CD8-positive, alpha-beta T cell (primary cell): ENCODE measurements at regions of chr2 and their contacts with region 1.

Region 1: GRCh38 chr2:162123806-162124758 is 28.0 kb downstream of the GCG start:
- DNase-seq: peak in 3 of 9 experiments; percentile 22 to 77 (median 72)
- ATAC-seq: peak; percentile 71
- H3K4me3 ChIP-seq: no peak overlapping the region
- H3K4me3 Mint-ChIP-seq: no peak overlapping the region
- H3K27ac ChIP-seq: no peak overlapping the region
- H3K27ac Mint-ChIP-seq: no peak overlapping the region
- H3K4me1 ChIP-seq: no peaks in the 10 kb centered on the region
- H3K4me1 Mint-ChIP-seq: no peaks in the 10 kb centered on the region
- H3K27me3 ChIP-seq: no peaks in the 10 kb centered on the region
- H3K27me3 Mint-ChIP-seq: no peaks in the 10 kb centered on the region
- CTCF ChIP-seq: peak; percentile 96

Region 2: GRCh38 chr2:161223139-161223732 is 900.8 kb before region 1 on chr2:
- CTCF ChIA-PET with region 1: no interaction called
- POLR2A ChIA-PET with region 1: no interaction called
- intact Hi-C with region 1: loop called (anchors 5 to 10 kb)
- DNase-seq: peak in 4 of 9 experiments; percentile 20 to 69 (median 44)
- ATAC-seq: peak; percentile 87
- H3K4me3 ChIP-seq: no peak overlapping the region
- H3K4me3 Mint-ChIP-seq: no peak overlapping the region
- H3K27ac ChIP-seq: no peak overlapping the region
- H3K27ac Mint-ChIP-seq: no peak overlapping the region
- H3K4me1 ChIP-seq: no peaks in the 10 kb centered on the region
- H3K4me1 Mint-ChIP-seq: no peaks in the 10 kb centered on the region
- H3K27me3 ChIP-seq: no peaks in the 10 kb centered on the region
- H3K27me3 Mint-ChIP-seq: no peaks in the 10 kb centered on the region
- CTCF ChIP-seq: peak; percentile 94

Region 3: DNA sequence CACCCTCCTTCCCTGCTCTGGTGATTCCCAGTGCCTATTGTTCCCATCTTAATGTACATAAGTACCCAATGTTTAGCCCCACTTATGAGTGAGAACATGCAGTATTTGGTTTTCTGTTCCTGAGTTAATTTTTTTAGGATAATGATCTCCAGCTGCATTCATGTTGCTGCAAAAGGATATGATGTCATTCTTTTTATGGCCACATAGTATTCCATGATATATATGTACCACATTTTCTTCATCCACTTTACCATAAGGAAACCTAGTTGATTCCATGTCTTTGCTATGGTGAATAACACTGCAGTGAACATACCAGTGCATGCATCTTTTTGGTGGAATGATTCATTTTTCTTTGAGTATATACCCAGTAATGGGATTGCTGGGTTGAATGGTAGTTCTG is 315.5 kb before region 1 on chr2:
- CTCF ChIA-PET with region 1: no interaction called
- POLR2A ChIA-PET with region 1: no interaction called
- intact Hi-C with region 1: loop called in 1 of 2 experiments (anchors 10 kb)
- DNase-seq: no peak
- ATAC-seq: no peak
- H3K4me3 ChIP-seq: no peak overlapping the region
- H3K4me3 Mint-ChIP-seq: no peak overlapping the region
- H3K27ac ChIP-seq: no peak overlapping the region
- H3K27ac Mint-ChIP-seq: no peak overlapping the region
- H3K4me1 ChIP-seq: no peaks in the 10 kb centered on the region
- H3K4me1 Mint-ChIP-seq: no peaks in the 10 kb centered on the region
- H3K27me3 ChIP-seq: no peaks in the 10 kb centered on the region
- H3K27me3 Mint-ChIP-seq: no peaks in the 10 kb centered on the region
- CTCF ChIP-seq: no peak

Region 4: GRCh38 chr2:161992526-161992925 is 131.6 kb before region 1 on chr2:
- CTCF ChIA-PET with region 1: interaction called, 7 read pairs
- POLR2A ChIA-PET with region 1: interaction called, 3 read pairs
- intact Hi-C with region 1: loop called in 1 of 2 experiments (anchors 5 kb)
- DNase-seq: peak; percentile 12 to 69 (median 48)
- ATAC-seq: peak; percentile 76
- H3K4me3 ChIP-seq: peak overlapping the region; percentile 7 to 34
- H3K4me3 Mint-ChIP-seq: peak overlapping the region; percentile 87
- H3K27ac ChIP-seq: peak overlapping the region; percentile 44 to 70
- H3K27ac Mint-ChIP-seq: peak overlapping the region; percentile 98
- H3K4me1 ChIP-seq: peaks cover 49% of the 10 kb centered on the region
- H3K4me1 Mint-ChIP-seq: peaks cover 56% of the 10 kb centered on the region
- H3K27me3 ChIP-seq: no peaks in the 10 kb centered on the region
- H3K27me3 Mint-ChIP-seq: no peaks in the 10 kb centered on the region
- CTCF ChIP-seq: no peak

Region 5: GRCh38 chr2:162073888-162074645 is 50.0 kb before region 1 on chr2 and contains the start of gene DPP4:
- CTCF ChIA-PET with region 1: interaction called, 3 read pairs
- POLR2A ChIA-PET with region 1: interaction called, 3 read pairs
- intact Hi-C with region 1: loop called in 1 of 2 experiments (anchors 5 kb)
- DNase-seq: peak; percentile 19 to 77 (median 49)
- ATAC-seq: peak; percentile 80
- H3K4me3 ChIP-seq: peak within 1 kb of the TSS; percentile 79 to 83
- H3K4me3 Mint-ChIP-seq: peak within 1 kb of the TSS; percentile 96
- H3K27ac ChIP-seq: peak within 1 kb of the TSS; percentile 31 to 67
- H3K27ac Mint-ChIP-seq: peak within 1 kb of the TSS; percentile 93
- H3K4me1 ChIP-seq: peaks cover 26% of the 10 kb centered on the region
- H3K4me1 Mint-ChIP-seq: peaks cover 49% of the 10 kb centered on the region
- H3K27me3 ChIP-seq: no peaks in the 10 kb centered on the region
- H3K27me3 Mint-ChIP-seq: no peaks in the 10 kb centered on the region
- CTCF ChIP-seq: no peak
- total RNA-seq, gene DPP4: 13.5 to 15.4 TPM